GM23248 (cell line): ENCODE measurements at regions of chr1 and their contacts with region 1.

Region 1: GRCh38 chr1:165898837-165899236 is 71.4 kb downstream of the UCK2 start:
- DNase-seq: peak; percentile 98
- H3K4me3 ChIP-seq: peak overlapping the region; percentile 18; the same call in 1 of the 2 replicates
- H3K27ac ChIP-seq: peak overlapping the region; percentile 99
- H3K4me1 ChIP-seq: peaks cover 84% of the 10 kb centered on the region
- H3K27me3 ChIP-seq: no peaks in the 10 kb centered on the region

Region 2: DNA sequence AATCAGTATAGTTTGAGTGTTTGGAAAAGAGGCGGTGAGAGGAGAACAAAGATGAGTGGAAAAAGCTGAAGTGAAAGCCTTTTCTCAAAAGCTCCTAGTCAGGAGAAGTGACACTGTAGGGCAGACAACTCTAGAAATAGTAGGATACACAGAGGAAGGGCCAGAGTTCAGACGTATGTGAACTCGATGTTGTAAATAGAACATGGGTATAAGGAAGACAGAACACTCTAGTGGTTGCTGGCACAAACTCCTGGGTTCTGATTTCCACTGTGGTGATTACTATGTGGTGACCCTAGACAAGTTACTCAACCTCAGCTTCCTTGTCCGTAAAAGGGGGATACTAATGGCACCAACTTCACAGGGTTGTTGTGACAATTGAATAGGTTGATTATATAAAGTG is 298.0 kb before region 1 on chr1:
- in situ Hi-C with region 1: loop called (anchors 10 kb)
- DNase-seq: no peak
- H3K4me3 ChIP-seq: no peak overlapping the region
- H3K27ac ChIP-seq: no peak overlapping the region
- H3K4me1 ChIP-seq: peaks cover 19% of the 10 kb centered on the region
- H3K27me3 ChIP-seq: no peaks in the 10 kb centered on the region

Region 3: GRCh38 chr1:165768513-165769394 is 130.1 kb before region 1 on chr1 and contains the start of gene TMCO1:
- in situ Hi-C with region 1: loop called (anchors 10 kb)
- DNase-seq: peak; percentile 100
- H3K4me3 ChIP-seq: peak within 1 kb of the TSS; percentile 94
- H3K27ac ChIP-seq: peak within 1 kb of the TSS; percentile 93
- H3K4me1 ChIP-seq: peaks cover 49% of the 10 kb centered on the region
- H3K27me3 ChIP-seq: no peaks in the 10 kb centered on the region
- total RNA-seq, gene TMCO1: 116 and 126 TPM in 2 replicates